ENCODE measurements at regions of chr9 and their contacts with region 1.

Region 1: GRCh38 chr9:133715866-133716563 is 22.1 kb downstream of the SARDH start:
- DNase-seq: peak; percentile 49
- ATAC-seq: peak; percentile 63
- H3K4me3 Mint-ChIP-seq: no peak overlapping the region
- H3K27ac Mint-ChIP-seq: no peak overlapping the region
- H3K4me1 Mint-ChIP-seq: peaks cover 3% of the 10 kb centered on the region
- H3K27me3 Mint-ChIP-seq: peaks cover under 1% of the 10 kb centered on the region

Region 2: DNA sequence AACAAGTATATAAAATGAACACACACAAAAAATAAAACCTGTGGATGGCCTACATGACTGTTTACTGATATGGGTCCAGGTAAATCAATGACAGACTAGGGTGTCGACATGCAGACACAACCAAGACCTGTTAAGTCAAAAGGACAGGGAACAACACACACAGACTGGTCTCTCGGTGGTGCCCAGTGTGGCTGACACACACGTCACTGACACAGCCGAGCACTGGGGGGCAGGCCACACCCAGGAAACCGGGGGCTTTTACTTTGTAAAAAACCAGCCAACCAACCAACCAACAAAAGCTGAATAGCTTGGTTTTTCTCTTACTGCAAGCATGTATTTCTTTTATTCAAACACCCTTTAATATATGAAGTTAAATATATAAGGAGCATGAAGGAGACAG is 111.8 kb before region 1 on chr9:
- CTCF ChIA-PET with region 1: interaction called, 26 read pairs
- POLR2A ChIA-PET with region 1: no interaction called
- DNase-seq: peak; percentile 66
- ATAC-seq: peak; percentile 79
- H3K4me3 Mint-ChIP-seq: no peak overlapping the region
- H3K27ac Mint-ChIP-seq: no peak overlapping the region
- H3K4me1 Mint-ChIP-seq: peaks cover 10% of the 10 kb centered on the region
- H3K27me3 Mint-ChIP-seq: peaks cover 12% of the 10 kb centered on the region

Measured in activated CD8-positive, alpha-beta T cell treated with anti-CD3 and anti-CD28 coated beads, Interleukin-2, amount 10 ng/mL, durations not matched to agents 7 days and 5 days (primary cell).